ENCODE measurements at regions of chr16 and their contacts with region 1.

Region 1: DNA sequence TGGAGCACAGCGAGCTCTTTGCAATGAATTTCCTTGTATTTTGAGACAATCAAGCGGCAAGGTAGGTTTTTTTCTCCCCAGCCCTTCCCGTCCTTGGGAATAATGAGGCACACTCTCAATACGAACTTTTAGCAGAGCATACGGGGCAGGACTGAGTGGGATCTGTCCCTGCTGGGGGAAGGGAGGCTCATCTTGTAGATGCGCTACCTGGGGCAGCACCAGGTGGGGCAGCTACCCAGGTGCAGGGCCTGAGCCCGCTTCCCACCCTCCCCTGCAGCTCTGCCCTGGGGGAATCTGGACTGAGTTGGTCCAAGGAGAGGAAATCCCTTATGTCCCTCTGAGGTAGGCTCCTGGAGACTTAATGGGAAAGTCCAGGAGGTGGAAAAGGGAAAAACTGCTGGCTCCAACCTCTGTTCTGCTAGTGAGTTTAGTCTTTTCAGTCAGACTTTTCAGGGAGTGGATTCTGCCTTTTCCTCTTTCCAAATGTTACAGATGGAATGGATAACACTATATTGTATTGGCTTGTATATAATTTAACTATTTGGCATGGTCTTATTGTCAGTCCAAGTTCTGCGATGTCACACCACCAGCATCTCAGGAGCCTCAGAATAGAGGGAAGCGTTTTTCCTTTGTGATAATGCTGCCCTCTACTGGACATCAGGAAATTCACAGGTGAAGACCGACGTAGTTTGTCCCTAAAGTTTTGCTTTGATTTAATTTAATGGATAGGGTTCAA is 9.6 kb upstream of the CES1 start:
- DNase-seq: peak; percentile 18
- ATAC-seq: peak; percentile 76
- H3K4me3 ChIP-seq: no peak overlapping the region
- H3K27ac ChIP-seq: no peak overlapping the region
- H3K4me1 ChIP-seq: no peaks in the 10 kb centered on the region
- H3K27me3 ChIP-seq: peaks cover 24% of the 10 kb centered on the region
- CTCF ChIP-seq: peak; percentile 58 to 75 (median 74); a peak in 5 of 6 replicates
- POLR2A ChIP-seq: no peak
- RAD21 ChIP-seq: peak; percentile 77

Region 2: GRCh38 chr16:55711959-55712876 is 130.3 kb before region 1 on chr16:
- CTCF ChIA-PET with region 1: interaction called, 15 read pairs
- POLR2A ChIA-PET with region 1: interaction called, 3 read pairs
- RAD21 ChIA-PET with region 1: no interaction called
- intact Hi-C with region 1: loop called (anchors 1 kb)
- DNase-seq: peak; percentile 31
- ATAC-seq: peak; percentile 92
- H3K4me3 ChIP-seq: no peak overlapping the region
- H3K27ac ChIP-seq: no peak overlapping the region
- H3K4me1 ChIP-seq: no peaks in the 10 kb centered on the region
- H3K27me3 ChIP-seq: peaks cover 47% of the 10 kb centered on the region
- CTCF ChIP-seq: peak; percentile 47 to 68 (median 54); a peak in 5 of 6 replicates
- POLR2A ChIP-seq: no peak
- RAD21 ChIP-seq: peak; percentile 71

Region 3: DNA sequence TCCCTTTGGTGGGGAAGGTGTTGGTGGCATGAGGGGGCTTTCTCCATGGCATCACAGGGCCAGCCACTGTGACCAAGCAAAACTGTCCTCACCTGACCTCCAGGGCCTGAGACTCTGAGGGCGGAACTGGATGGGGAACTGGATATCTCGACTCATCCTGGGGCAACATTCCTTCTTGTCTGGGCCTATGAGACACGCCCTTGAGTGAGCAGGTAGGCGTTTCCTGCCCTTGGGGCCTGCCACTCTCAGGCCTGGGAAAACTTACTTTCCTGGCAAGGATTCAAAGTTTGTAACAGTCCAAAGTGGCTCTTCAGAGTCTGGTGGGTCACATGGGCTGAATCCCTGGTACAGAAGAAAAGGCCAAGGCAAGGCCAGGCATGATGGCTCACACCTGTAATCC is 849.3 kb after region 1 on chr16:
- CTCF ChIA-PET with region 1: no interaction called
- POLR2A ChIA-PET with region 1: no interaction called
- RAD21 ChIA-PET with region 1: no interaction called
- intact Hi-C with region 1: no loop called
- DNase-seq: peak; percentile 66
- ATAC-seq: peak; percentile 92
- H3K4me3 ChIP-seq: peak overlapping the region in 1 of 2 experiments; percentile 9; a peak in 1 of 4 replicates
- H3K27ac ChIP-seq: 0 out of 2 replicates have a peak overlapping the region, but pooled peaks have one; percentile 25
- H3K4me1 ChIP-seq: peaks cover 19 to 36% of the 10 kb centered on the region in 2 experiments
- H3K27me3 ChIP-seq: no peaks in the 10 kb centered on the region
- CTCF ChIP-seq: no peak
- POLR2A ChIP-seq: no peak
- RAD21 ChIP-seq: no peak

Measured in HCT116 (cell line).